ENCODE measurements at regions of chr13 and their contacts with region 1.

Region 1: DNA sequence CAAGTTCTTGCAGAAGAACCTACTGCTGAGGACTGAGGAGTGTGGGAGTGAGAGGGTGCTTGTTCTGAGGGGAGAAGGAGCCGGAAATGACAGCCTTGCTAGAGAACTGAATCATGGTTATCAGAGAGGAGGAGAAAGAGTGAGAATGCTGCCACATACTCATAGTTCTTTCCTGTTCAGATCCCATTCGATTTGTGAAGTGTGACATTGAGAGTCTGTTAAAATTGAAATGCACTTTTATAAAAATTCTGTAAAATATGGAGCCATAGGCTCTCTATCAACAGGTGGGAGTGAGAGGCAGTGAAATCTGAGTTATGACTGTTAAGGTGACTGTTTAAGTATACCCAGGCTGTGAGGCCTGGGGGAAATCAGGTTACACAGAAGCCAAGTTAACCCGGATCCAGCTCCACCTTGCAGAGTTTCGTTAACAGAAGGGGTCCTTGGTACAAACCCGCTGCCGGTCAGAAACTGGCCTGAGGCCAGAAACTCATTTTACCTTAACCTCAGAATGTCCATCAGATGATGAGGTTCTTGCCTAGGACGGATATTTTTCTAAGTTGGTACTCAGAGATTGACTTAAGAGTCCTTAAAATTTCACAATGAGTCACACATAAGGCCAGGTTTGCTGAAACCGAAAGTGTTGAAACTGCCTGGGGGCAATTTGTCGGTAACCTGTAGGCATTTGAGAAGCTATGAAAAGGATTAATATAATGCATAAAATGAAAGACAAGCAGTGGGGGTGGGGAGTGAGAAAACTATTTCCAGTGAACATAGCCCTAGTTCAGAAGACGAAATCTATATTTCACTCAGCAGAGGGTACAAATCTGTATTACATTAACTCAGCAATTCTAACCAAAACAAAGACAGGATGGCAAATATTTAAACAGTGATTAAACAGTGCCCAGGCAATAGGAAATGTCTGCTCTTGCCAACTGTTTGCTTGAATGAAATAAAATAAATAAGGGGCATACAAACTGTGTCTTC is 350.5 kb downstream of the KCNRG start:
- DNase-seq: peak; percentile 54
- H3K4me3 Mint-ChIP-seq: peak overlapping the region; percentile 66
- H3K27ac Mint-ChIP-seq: peak overlapping the region; percentile 75
- H3K4me1 Mint-ChIP-seq: peaks cover 48% of the 10 kb centered on the region
- H3K27me3 Mint-ChIP-seq: peaks cover 32% of the 10 kb centered on the region

Region 2: DNA sequence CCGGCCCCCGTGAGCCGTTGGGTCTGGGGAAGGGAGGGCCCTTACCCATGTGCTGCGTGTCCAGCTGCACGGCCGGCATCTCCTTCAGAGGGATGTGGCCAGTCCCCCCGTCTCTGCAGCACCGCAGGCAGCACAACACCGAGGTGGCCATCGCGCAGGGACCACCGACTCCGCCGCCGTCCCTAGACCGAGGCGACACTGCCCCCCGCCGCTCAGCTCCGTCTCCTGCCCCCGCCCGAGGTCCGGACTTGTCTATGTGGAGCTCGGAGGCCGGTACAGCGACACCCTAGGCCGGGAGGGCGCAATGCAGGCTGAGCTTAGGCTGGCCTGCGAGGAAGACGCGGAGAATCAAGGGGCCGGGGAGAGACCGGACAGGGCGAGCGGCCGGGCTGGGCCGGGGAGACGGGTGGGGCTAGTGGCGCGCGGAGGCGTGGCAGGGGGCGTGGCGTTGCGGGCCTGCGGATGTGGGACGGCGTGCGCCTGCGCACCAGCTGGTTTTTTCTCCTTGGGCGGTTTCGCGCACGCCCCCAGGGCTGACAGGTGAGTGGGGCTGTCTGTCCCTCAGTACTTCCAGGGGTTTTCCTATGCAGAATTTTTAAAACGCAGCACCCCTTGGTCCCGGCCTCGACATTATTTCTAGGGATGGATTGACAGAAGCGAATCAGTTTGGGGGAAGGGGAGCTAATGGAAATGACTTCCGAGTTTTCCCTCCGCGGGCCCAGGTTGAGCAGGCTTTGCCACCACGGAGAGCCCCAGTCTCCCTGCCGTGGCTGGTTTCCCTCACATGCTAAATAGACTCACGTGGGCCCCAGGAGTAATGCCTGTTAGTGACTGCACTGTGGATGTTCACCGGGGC is 429.4 kb before region 1 on chr13 and contains the start of gene SPRYD7:
- intact Hi-C with region 1: loop called (anchors 5 kb)
- DNase-seq: peak; percentile 92
- H3K4me3 Mint-ChIP-seq: peak within 1 kb of the TSS; percentile 94
- H3K27ac Mint-ChIP-seq: peak within 1 kb of the TSS; percentile 87
- H3K4me1 Mint-ChIP-seq: peaks cover 11% of the 10 kb centered on the region
- H3K27me3 Mint-ChIP-seq: peaks cover 22% of the 10 kb centered on the region
- total RNA-seq, gene SPRYD7: 6.9 and 7.0 TPM in 2 replicates

Region 3: DNA sequence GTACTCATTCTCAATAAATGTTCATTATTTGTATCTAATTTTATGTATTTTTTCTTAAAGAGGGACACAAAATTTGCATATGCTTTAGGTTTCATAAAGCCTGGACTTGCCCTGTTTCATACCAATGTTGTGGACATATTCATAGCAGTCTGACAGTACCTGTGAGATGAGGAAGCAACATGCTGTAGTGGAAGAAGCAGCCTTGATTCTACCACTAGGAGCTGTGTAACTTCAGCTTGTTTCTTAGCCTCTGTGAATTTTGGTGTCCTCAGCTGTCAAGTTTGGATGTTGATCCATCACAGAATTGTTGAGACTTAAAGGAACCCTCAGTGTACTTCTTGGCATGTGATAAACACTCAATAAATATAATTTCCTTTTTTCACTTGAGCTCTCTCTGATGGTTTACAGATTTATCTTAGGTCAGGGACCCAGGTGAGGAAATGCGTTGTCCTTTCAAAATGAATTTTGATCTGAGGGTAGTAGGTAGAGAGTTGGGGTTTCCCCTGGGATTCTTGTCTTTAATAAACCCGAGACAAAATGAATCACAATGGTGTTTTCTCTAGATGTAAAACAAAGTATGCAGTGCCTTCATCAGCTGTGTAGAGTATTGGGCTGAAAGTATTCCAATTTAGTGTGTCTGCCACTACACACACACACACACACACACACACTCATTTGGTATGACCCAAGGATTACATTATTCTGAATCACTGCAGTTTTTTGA is 198.3 kb before region 1 on chr13:
- intact Hi-C with region 1: loop called (anchors 2 kb)
- DNase-seq: no peak
- H3K4me3 Mint-ChIP-seq: no peak overlapping the region
- H3K27ac Mint-ChIP-seq: no peak overlapping the region
- H3K4me1 Mint-ChIP-seq: peaks cover 10% of the 10 kb centered on the region
- H3K27me3 Mint-ChIP-seq: peaks cover 20% of the 10 kb centered on the region

Region 4: DNA sequence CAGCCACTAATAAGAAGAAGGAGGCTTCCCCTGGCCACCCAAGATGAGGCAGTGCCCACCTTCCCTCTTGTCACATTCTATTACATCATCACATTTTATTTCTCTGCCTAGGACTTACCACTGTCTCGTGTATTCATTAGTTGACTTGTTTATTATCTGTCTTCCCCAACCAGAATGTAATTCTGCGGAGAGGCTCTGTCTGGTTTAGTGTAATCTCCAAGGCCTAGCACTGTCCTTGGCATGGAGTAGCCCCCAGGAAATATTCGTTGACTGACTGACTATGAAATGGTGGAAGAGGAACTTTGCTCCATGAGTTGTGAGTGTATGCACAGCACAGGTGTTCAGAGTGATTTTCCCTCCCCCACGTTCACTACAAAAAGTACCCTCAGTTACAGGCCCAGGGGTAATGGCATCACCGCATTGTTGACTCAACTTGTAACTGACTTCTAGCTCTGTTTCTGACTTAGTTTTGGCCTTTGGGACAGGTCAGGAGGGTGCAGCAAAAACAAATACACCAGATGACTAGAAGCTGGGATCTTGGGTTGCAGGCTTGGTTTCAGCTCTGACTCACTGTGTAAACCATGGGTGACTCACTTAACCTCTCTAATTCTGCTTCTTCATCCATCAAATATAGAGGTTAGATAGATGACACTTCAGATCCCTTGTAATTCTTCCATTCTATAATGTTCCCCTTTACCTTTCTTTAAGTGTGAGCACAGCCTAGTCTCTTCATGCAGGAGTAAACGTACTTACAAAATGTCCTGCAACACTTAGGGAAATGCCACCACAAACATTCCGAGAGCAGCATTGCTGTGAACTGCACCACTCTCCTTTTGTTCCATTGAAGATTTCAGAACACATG is 120.8 kb before region 1 on chr13:
- intact Hi-C with region 1: loop called (anchors 1 kb)
- DNase-seq: peak; percentile 53
- H3K4me3 Mint-ChIP-seq: peak overlapping the region; percentile 20
- H3K27ac Mint-ChIP-seq: peak overlapping the region; percentile 73
- H3K4me1 Mint-ChIP-seq: peaks cover 56% of the 10 kb centered on the region
- H3K27me3 Mint-ChIP-seq: peaks cover 21% of the 10 kb centered on the region

Region 5: GRCh38 chr13:50428183-50428877 is 62.6 kb after region 1 on chr13:
- intact Hi-C with region 1: loop called (anchors 1 kb)
- DNase-seq: no peak
- H3K4me3 Mint-ChIP-seq: no peak overlapping the region
- H3K27ac Mint-ChIP-seq: peak overlapping the region; percentile 56
- H3K4me1 Mint-ChIP-seq: peaks cover 11% of the 10 kb centered on the region
- H3K27me3 Mint-ChIP-seq: peaks cover 5% of the 10 kb centered on the region

Region 6: GRCh38 chr13:50911937-50912795 is 546.5 kb after region 1 on chr13:
- intact Hi-C with region 1: loop called (anchors 2 kb)
- DNase-seq: peak; percentile 87
- H3K4me3 Mint-ChIP-seq: peak overlapping the region; percentile 82
- H3K27ac Mint-ChIP-seq: peak overlapping the region; percentile 37
- H3K4me1 Mint-ChIP-seq: peaks cover 68% of the 10 kb centered on the region
- H3K27me3 Mint-ChIP-seq: no peaks in the 10 kb centered on the region